ENCODE measurements at regions of chr15 and their contacts with region 1.

Region 1: GRCh38 chr15:90400406-90401314 is 12.6 kb downstream of the IQGAP1 start:
- DNase-seq: peak in 8 of 9 donors; percentile 49 to 89 (median 82)
- ATAC-seq: peak; percentile 98
- H3K4me3 ChIP-seq: peak overlapping the region; percentile 37
- H3K4me3 Mint-ChIP-seq: peak overlapping the region; percentile 61 to 86 (median 80)
- H3K27ac ChIP-seq: peak overlapping the region; percentile 83
- H3K27ac Mint-ChIP-seq: peak overlapping the region; percentile 94 to 99 (median 99)
- H3K4me1 ChIP-seq: peaks cover 30 to 36% of the 10 kb centered on the region in 2 donors
- H3K4me1 Mint-ChIP-seq: peaks cover 38 to 71% (median 64%) of the 10 kb centered on the region in 7 donors
- H3K27me3 ChIP-seq: no peaks in the 10 kb centered on the region
- H3K27me3 Mint-ChIP-seq: no peaks in the 10 kb centered on the region

Region 2: DNA sequence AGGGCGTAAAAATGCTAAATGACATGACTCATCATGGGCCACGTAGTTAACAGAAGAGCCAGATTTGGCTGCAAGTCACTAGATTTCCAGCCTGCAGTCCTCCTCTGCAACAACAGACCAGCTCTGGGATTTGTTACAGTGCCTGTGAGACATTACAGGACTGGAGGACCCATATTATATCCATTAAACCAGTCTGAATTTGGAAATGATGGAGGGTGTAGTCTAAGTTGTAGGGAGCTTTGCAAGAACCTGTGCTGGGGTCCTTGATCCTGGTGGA is 37.8 kb before region 1 on chr15:
- CTCF ChIA-PET with region 1: interaction called, 3 read pairs
- POLR2A ChIA-PET with region 1: no interaction called
- intact Hi-C with region 1: loop called (anchors 1 to 5 kb)
- DNase-seq: no peak
- ATAC-seq: no peak
- H3K4me3 ChIP-seq: no peak overlapping the region
- H3K4me3 Mint-ChIP-seq: peak overlapping the region in 1 of 10 donors; percentile 44
- H3K27ac ChIP-seq: no peak overlapping the region
- H3K27ac Mint-ChIP-seq: no peak overlapping the region
- H3K4me1 ChIP-seq: peaks cover 6 to 13% of the 10 kb centered on the region in 2 donors
- H3K4me1 Mint-ChIP-seq: peaks cover 11 to 35% (median 34%) of the 10 kb centered on the region in 7 donors
- H3K27me3 ChIP-seq: no peaks in the 10 kb centered on the region
- H3K27me3 Mint-ChIP-seq: no peaks in the 10 kb centered on the region

Region 3: DNA sequence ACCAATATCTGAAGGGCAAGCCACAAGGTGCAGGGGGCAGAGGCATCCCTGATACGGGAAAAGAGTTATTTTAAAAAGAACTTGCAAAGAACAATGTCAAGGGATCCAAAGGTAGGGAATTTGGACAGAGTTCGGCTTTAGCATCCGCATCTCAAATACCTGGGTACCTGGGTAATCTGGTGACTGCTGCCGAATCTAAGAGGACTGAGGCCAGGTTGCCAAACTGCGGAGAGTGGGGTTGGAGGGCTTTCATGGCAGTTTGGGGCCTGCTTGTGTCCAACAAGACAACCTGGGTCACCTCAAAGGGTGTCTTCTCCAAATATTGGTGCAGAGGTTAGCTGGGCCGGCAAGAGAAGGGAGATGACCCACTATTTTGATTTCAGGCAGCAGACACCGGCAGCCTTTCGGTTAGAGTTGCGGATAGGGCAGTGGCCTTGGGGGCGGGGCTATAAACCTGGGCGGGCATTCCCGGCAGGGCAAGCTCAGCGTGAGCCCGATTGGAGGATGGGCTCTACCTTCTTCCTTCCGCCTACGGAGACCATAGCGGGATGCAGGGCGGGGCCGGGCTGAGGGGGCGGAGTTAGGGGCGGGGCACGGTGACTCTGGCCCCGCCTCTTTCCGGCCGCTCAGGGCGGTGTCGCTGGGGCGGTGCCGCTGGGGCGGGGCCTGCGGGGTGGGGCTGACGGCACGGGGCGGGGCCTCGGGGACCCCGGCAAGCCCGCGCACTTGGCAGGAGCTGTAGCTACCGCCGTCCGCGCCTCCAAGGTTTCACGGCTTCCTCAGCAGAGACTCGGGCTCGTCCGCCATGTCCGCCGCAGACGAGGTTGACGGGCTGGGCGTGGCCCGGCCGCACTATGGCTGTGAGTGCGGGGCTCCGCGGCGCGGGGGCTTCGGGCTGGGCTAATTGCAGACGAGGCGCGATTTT is 12.9 kb before region 1 on chr15 and contains the start of gene IQGAP1:
- CTCF ChIA-PET with region 1: no interaction called
- POLR2A ChIA-PET with region 1: interaction called, 48 read pairs
- intact Hi-C with region 1: loop called (anchors 1 kb)
- DNase-seq: peak; percentile 91 to 96 (median 94)
- ATAC-seq: peak; percentile 97
- H3K4me3 ChIP-seq: peak within 1 kb of the TSS; percentile 88
- H3K4me3 Mint-ChIP-seq: peak within 1 kb of the TSS; percentile 80 to 95 (median 92)
- H3K27ac ChIP-seq: peak within 1 kb of the TSS; percentile 93
- H3K27ac Mint-ChIP-seq: peak within 1 kb of the TSS; percentile 68 to 99 (median 94)
- H3K4me1 ChIP-seq: peaks cover 29 to 33% of the 10 kb centered on the region in 2 donors
- H3K4me1 Mint-ChIP-seq: peaks cover 38 to 56% (median 50%) of the 10 kb centered on the region in 7 donors
- H3K27me3 ChIP-seq: no peaks in the 10 kb centered on the region
- H3K27me3 Mint-ChIP-seq: no peaks in the 10 kb centered on the region
- total RNA-seq, gene IQGAP1: 81.8 to 263 (median 93.8) TPM

Region 4: DNA sequence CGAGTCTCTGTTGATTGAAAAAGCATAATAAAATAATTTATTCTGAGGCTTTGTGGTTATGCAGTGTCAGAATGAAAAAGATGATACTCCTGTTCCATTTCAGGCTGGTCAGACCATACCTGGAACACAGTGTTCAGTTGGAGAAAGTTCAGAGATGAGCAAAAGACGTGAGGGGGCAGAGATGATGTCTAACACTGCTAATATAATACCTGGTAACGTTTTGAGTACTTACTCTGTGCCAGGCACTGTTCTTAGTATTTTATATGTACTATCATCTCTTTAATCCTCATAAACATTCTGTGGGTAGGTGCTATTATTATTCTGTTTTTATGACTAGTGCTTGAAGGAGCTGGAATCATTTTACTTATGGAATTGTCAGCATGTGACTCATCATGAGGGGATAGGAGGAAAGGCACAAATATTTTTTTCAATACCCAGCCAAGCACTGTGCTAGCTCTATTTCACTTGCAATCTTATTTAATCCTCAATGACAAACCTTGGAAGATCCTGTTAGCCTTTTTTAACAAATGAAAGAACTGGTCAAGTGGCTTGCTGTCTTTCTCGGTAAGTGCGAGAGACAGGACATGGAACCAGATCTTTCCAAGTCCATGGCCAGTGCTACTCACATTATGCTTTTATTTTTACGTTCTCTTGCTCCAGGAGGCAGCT is 19.2 kb after region 1 on chr15:
- CTCF ChIA-PET with region 1: no interaction called
- POLR2A ChIA-PET with region 1: interaction called, 4 read pairs
- intact Hi-C with region 1: loop called in 1 of 2 experiments (anchors 2 kb)
- DNase-seq: no peak
- ATAC-seq: no peak
- H3K4me3 ChIP-seq: no peak overlapping the region
- H3K4me3 Mint-ChIP-seq: peak overlapping the region in 6 of 10 donors; percentile 1 to 70 (median 28)
- H3K27ac ChIP-seq: no peak overlapping the region
- H3K27ac Mint-ChIP-seq: peak overlapping the region in 7 of 9 donors; percentile 1 to 81 (median 21)
- H3K4me1 ChIP-seq: peaks cover 18 to 22% of the 10 kb centered on the region in 2 donors
- H3K4me1 Mint-ChIP-seq: peaks cover 40 to 83% (median 67%) of the 10 kb centered on the region in 7 donors
- H3K27me3 ChIP-seq: no peaks in the 10 kb centered on the region
- H3K27me3 Mint-ChIP-seq: no peaks in the 10 kb centered on the region

Region 5: GRCh38 chr15:90860942-90861675 is 460.4 kb after region 1 on chr15:
- CTCF ChIA-PET with region 1: no interaction called
- POLR2A ChIA-PET with region 1: no interaction called
- intact Hi-C with region 1: loop called in 1 of 2 experiments (anchors 10 kb)
- DNase-seq: no peak
- ATAC-seq: no peak
- H3K4me3 ChIP-seq: no peak overlapping the region
- H3K4me3 Mint-ChIP-seq: no peak overlapping the region
- H3K27ac ChIP-seq: no peak overlapping the region
- H3K27ac Mint-ChIP-seq: peak overlapping the region in 1 of 9 donors; percentile 53
- H3K4me1 ChIP-seq: peaks cover 8 to 9% of the 10 kb centered on the region in 2 donors
- H3K4me1 Mint-ChIP-seq: peaks cover 0 to 65% (median 15%) of the 10 kb centered on the region in 7 donors
- H3K27me3 ChIP-seq: no peaks in the 10 kb centered on the region
- H3K27me3 Mint-ChIP-seq: no peaks in the 10 kb centered on the region

Measured in naive thymus-derived CD4-positive, alpha-beta T cell (primary cell).